SK-N-SH (cell line): ENCODE measurements at regions of chr3 and their contacts with region 1.

Region 1: GRCh38 chr3:38164966-38165680 is at the start of gene OXSR1:
- DNase-seq: peak; percentile 96
- H3K4me3 ChIP-seq: peak within 1 kb of the TSS; percentile 63 to 89
- H3K27ac ChIP-seq: peak within 1 kb of the TSS; percentile 97 to 98
- H3K4me1 ChIP-seq: peaks cover 0 to 13% of the 10 kb centered on the region in 2 experiments; a peak in 2 of 4 replicates
- H3K27me3 ChIP-seq: no peaks in the 10 kb centered on the region
- CTCF ChIP-seq: no peak
- EP300 ChIP-seq: 0 out of 4 replicates have a peak, but pooled peaks of 1 of the 2 experiments have one; percentile 20
- RAD21 ChIP-seq: no peak
- polyA plus RNA-seq, gene OXSR1: 22.3 and 31.9 TPM in 2 replicates

Region 2: DNA sequence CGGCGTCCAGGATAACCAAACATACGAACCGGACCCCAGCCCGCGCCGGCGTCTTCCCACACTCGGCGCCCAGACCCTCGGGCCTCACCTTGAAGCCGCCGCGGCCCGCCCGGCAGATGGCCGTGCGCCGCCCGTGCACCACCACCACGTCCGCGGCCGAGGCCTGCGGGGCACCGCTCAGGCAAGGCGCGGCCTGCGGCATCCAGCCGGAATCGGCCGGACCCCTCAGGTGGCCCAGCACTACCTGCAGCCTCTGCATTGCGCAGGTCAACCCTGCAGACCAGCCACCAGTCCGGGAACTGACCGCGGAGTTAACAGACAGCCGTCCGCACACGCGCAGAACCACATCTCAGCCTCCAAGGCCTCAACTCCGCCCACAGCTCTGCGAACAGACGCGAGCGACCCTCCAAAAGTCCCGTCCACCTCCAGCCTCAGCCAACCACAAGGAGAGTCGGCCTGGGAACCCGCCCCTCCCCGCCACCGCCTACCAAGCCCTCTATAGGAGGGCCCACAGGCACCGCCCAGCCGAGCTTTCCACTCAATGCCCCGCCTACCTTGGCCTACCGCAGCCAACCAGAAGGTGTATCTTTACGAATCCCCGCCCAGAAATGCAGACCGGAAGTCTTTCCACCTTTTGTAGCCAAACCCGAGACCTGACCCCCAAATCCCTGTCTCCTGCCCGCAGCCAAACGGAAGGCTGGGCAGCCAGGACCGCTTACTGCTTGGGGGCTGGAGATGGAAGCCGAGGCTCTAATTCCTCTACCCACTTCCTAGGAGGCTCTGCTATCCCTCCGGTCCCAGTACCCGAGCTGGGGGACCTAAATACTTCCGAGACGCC is 28.1 kb before region 1 on chr3 and contains the start of gene ACAA1:
- CTCF ChIA-PET with region 1: interaction called, 9 read pairs
- POLR2A ChIA-PET with region 1: interaction called, 25 read pairs
- DNase-seq: peak; percentile 98
- H3K4me3 ChIP-seq: peak within 1 kb of the TSS; percentile 89 to 94
- H3K27ac ChIP-seq: peak within 1 kb of the TSS; percentile 89 to 91
- H3K4me1 ChIP-seq: peaks cover 16 to 31% of the 10 kb centered on the region in 2 experiments; a peak in 2 of 4 replicates
- H3K27me3 ChIP-seq: no peaks in the 10 kb centered on the region
- CTCF ChIP-seq: no peak
- EP300 ChIP-seq: no peak
- RAD21 ChIP-seq: no peak
- polyA plus RNA-seq, gene ACAA1: 86.4 and 101 TPM in 2 replicates

Region 3: DNA sequence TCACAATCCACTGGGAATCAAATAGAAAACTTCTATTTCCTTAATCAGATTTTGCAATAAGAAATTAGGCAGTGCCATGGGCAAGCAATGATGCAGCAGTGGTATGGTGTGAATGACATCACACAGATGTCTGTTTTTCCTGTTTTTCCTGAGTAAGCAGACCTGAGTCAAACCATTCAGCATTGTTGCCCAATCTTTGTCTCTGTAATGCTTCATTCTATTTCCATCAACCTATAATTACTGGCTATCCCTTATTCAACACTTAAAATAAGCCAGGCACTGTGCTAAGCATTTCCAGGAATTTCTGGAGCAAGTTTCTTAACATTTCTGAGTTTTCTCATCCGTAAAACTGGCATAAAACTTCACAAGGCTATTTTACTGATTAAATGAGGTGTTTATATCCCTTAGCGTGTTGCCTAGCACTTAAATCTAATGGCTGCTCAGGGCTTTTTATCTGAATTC is 11.1 kb before region 1 on chr3:
- CTCF ChIA-PET with region 1: interaction called, 11 read pairs
- POLR2A ChIA-PET with region 1: no interaction called
- DNase-seq: no peak
- H3K4me3 ChIP-seq: no peak overlapping the region
- H3K27ac ChIP-seq: no peak overlapping the region
- H3K4me1 ChIP-seq: peaks cover 0 to 5% of the 10 kb centered on the region in 2 experiments; a peak in 1 of 4 replicates
- H3K27me3 ChIP-seq: no peaks in the 10 kb centered on the region
- CTCF ChIP-seq: no peak
- EP300 ChIP-seq: no peak
- RAD21 ChIP-seq: no peak